Dorsolateral prefrontal cortex (tissue), 120 donors: ENCODE measurements at regions of chr13 and their contacts with region 1.

Region 1: GRCh38 chr13:40682449-40683240 is 16.2 kb upstream of the FOXO1 start:
- DNase-seq: no peak
- H3K4me3 ChIP-seq: peak overlapping the region in 1 of 59 donors; percentile 4
- H3K27ac ChIP-seq: no peak overlapping the region
- H3K27me3 ChIP-seq: no peaks in the 10 kb centered on the region
- CTCF ChIP-seq: peak; percentile 61 to 95 (median 78)

Region 2: DNA sequence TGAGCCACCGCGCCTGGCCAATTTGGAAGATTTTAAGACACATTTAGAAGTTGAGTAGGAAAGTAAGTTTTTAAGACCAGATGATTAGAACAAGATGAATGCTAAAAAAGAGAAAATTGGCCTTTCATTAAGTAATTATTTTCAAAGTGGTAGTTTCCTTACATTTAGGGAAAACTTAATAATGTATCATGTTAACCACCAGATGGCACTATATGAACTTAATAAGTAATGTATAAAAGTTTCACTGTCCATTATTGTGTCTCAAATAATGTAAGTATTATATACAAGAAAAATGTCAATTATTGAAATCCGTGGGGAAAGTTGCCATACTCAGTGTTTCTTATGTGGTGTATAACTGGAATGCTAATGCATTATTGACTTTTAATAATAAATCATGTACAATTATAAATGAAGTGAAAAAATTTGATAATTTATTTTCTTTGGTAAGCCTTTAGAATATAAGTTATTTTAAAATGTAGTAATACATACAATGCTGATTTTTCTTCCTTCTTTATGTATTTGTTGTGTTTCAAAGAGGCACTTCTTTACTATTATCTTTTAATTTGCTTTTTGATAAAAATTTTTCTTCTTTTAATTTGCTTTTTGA is 998.0 kb before region 1 on chr13:
- intact Hi-C with region 1: loop called (anchors 5 to 10 kb)
- DNase-seq: no peak
- H3K4me3 ChIP-seq: no peak overlapping the region
- H3K27ac ChIP-seq: no peak overlapping the region
- H3K27me3 ChIP-seq: no peaks in the 10 kb centered on the region
- CTCF ChIP-seq: peak; percentile 38 to 77 (median 63)

Region 3: DNA sequence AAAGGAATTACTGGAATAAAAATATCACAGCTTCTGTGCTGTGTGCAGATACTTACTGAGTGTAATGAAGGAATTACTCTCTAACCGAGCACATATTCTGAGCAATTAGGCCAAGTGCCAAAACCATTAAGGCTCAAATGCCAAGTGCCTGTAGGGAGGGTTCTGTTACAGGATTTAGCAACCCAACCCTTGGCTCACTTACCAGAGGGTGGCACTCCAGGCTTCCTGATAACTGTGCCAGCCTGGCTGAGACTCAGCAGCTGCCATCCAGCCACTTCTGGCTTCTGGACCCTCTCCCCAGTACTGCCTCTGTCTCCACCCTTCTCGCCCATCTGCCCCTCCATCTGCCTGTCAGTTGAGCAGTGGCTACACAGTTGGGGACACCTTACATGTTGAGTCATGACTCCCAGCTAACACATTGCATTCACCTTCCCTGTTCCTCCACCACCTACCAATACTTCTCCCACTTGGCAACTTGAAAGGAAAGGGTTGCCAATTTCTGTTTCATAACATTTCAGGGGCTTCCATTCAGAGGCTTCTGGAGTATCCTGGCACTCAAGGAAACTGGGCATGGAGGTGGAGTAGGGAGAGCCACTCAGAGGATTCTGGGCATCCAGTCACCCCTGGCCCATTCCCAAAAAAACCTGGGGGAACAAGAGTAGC is 916.7 kb before region 1 on chr13:
- intact Hi-C with region 1: loop called (anchors 5 to 10 kb)
- DNase-seq: peak; percentile 24 to 94 (median 60)
- H3K4me3 ChIP-seq: no peak overlapping the region
- H3K27ac ChIP-seq: peak overlapping the region in 2 of 59 donors; percentile 5 to 17
- H3K27me3 ChIP-seq: no peaks in the 10 kb centered on the region
- CTCF ChIP-seq: peak in 51 of 56 donors; percentile 15 to 64 (median 43)

Region 4: GRCh38 chr13:39777527-39778061 is 905.1 kb before region 1 on chr13:
- intact Hi-C with region 1: loop called in 1 of 2 experiments (anchors 10 kb)
- DNase-seq: no peak
- H3K4me3 ChIP-seq: no peak overlapping the region
- H3K27ac ChIP-seq: no peak overlapping the region
- H3K27me3 ChIP-seq: no peaks in the 10 kb centered on the region
- CTCF ChIP-seq: peak in 43 of 56 donors; percentile 18 to 62 (median 35)

Region 5: GRCh38 chr13:39942552-39943273 is 739.9 kb before region 1 on chr13:
- intact Hi-C with region 1: loop called (anchors 5 to 10 kb)
- DNase-seq: peak in 7 of 10 donors; percentile 15 to 67 (median 31)
- H3K4me3 ChIP-seq: no peak overlapping the region
- H3K27ac ChIP-seq: no peak overlapping the region
- H3K27me3 ChIP-seq: peaks cover 0 to 7% (median 0%) of the 10 kb centered on the region in 45 donors
- CTCF ChIP-seq: peak; percentile 36 to 91 (median 79)